ENCODE measurements at regions of chr18 and their contacts with region 1.

Region 1: DNA sequence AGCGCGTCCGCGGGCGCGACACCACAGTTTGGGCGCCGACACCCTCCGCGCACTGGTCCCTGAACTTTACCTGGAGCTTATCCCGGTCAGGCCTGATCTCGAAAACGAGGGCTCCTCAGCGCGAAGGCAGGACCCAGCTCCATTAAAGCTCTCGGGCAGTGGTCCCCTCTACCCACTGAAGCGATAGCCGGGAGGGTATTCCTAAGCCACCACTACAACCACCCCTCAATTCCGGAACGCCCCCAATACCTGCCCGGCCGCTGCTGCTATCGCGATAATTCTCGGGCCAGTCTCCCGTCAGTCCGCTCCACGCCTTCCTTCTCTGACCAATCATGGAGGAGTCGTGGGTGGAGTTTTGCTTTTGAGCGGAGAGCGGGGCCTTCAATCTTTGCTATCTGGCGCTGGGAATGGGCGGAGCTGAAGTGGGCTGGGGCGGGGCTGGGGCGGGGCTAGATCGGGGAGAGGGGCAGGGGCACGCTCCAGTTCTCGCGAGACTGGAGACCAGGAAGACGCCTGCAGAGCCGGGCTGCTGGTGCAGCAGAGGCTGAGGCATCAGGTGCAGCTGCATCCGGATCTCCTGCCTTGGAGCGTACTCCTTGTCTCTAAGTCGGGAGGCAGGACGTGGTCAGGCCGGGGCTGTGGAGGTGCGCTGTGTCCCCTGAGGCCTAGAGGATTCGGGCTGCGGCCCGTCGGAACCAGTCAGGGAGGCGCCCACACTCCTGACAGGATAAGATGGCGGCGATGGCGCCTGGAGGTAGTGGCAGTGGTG is at the starts of genes PIGN and RELCH:
- DNase-seq: peak; percentile 96 to 98
- ATAC-seq: peak; percentile 97 to 98
- H3K4me3 ChIP-seq: peak within 1 kb of the TSS; percentile 94 to 99 (median 97)
- H3K27ac ChIP-seq: peak within 1 kb of the TSS; percentile 84 to 90 (median 87)
- H3K4me1 ChIP-seq: peaks cover 26 to 36% of the 10 kb centered on the region in 2 donors
- H3K27me3 ChIP-seq: no peaks in the 10 kb centered on the region
- CTCF ChIP-seq: peak in 1 of 5 experiments; percentile 8
- POLR2A ChIP-seq: peak; percentile 58 to 82
- total RNA-seq, gene PIGN: 10.7 to 18.7 (median 14.8) TPM
- total RNA-seq, gene RELCH: 8.4 to 16.8 (median 12.6) TPM

Region 2: DNA sequence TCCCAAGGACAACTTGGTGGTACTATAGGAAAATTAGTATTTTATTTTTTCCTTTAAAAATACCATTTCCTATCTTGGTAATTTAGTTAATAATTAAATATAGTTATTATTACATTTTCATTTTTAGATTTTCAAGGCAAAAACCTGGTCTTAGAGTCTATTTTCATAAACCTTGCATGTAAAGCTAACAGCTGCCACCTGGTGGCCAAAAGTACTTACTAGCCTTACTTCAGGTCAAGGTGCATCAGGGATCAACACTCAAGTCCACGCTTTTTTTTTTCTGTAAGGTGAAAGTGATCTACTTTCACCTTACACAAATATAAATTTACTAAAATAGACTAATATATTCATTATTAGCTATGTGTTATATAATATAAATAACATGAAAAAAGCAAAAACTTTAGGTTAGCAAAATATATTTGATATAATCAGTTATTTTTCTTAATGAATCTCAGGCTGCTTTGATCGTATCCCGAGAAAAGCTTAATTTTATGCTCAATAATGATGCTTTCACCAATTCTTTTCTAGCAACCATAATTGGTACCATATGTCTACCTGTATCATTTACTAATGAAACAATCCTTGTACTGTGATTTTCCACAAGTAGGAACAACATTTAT is 62.6 kb after region 1 on chr18:
- in situ Hi-C with region 1: loop called in 3 of 4 experiments (anchors 5 to 10 kb)
- intact Hi-C with region 1: loop called (anchors 2 kb)
- DNase-seq: peak; percentile 11 to 57
- ATAC-seq: no peak
- H3K4me3 ChIP-seq: no peak overlapping the region
- H3K27ac ChIP-seq: no peak overlapping the region
- H3K4me1 ChIP-seq: no peaks in the 10 kb centered on the region
- H3K27me3 ChIP-seq: no peaks in the 10 kb centered on the region
- CTCF ChIP-seq: peak; percentile 41 to 80 (median 49)
- POLR2A ChIP-seq: no peak

Region 3: GRCh38 chr18:62522504-62523254 is 335.7 kb after region 1 on chr18 and contains the start of gene ZCCHC2:
- in situ Hi-C with region 1: no loop called
- intact Hi-C with region 1: loop called (anchors 5 kb)
- DNase-seq: peak; percentile 98
- ATAC-seq: peak; percentile 56 to 68
- H3K4me3 ChIP-seq: peak within 1 kb of the TSS; percentile 74 to 96 (median 86)
- H3K27ac ChIP-seq: peak within 1 kb of the TSS; percentile 98 to 100 (median 99)
- H3K4me1 ChIP-seq: peaks cover 17 to 27% of the 10 kb centered on the region in 2 donors
- H3K27me3 ChIP-seq: no peaks in the 10 kb centered on the region
- CTCF ChIP-seq: no peak
- POLR2A ChIP-seq: peak; percentile 95 to 98
- total RNA-seq, gene ZCCHC2: 22.1 to 37.9 (median 32.0) TPM

Region 4: DNA sequence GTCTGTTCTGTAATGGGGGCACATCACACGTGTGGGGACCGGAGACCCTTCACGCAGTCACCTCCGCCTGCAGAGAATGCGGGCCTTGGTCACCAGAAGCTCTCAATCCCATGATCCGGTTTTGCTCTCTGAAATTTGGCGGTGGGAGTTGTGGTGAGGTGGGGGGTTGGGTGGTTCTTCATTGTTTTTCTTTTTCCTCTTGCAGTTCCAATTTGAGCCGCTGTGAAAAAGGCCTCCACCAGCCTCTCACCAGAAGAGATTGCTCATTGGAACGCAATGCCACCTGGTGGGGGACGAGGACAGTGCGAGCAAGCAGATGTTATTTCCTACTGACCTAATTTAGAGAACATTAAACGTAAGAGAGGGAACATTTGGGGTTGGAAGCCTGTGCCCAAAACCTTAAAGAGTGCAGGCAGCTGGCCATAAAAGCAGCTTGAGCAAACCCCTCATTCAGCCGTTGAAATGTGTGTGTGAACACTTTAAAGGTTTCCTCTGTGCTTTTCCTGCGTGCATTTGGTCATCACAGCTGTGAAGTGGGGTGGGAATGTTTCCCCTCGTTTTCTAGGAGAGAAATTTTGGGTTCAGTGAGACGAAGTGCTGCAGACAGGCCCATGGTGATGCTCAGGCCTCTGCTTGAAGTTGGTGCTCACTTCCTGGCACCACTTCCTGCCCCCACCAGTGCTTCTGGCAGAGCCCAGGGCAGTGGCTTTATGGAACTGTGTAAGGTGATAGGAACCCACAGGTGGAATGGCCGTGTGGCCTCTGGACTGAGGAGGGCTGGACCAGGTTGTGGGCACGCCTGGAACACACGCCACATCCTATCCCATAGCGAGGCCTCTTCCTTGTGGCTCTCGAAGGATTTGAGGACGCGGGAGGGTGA is 397.5 kb after region 1 on chr18:
- in situ Hi-C with region 1: loop called in 1 of 4 experiments (anchors 25 kb)
- intact Hi-C with region 1: loop called (anchors 5 kb)
- DNase-seq: peak; percentile 78 to 83
- ATAC-seq: peak; percentile 90 to 95
- H3K4me3 ChIP-seq: peak overlapping the region in 2 of 4 donors; percentile 30 to 35
- H3K27ac ChIP-seq: peak overlapping the region; percentile 63 to 70 (median 64)
- H3K4me1 ChIP-seq: peaks cover 11 to 13% of the 10 kb centered on the region in 2 donors
- H3K27me3 ChIP-seq: no peaks in the 10 kb centered on the region
- CTCF ChIP-seq: peak; percentile 95 to 99 (median 97)
- POLR2A ChIP-seq: no peak

Region 5: GRCh38 chr18:63367053-63367953 is 1180.3 kb after region 1 on chr18 and contains the start of gene KDSR:
- in situ Hi-C with region 1: no loop called
- intact Hi-C with region 1: loop called (anchors 5 kb)
- DNase-seq: peak; percentile 85 to 90
- ATAC-seq: peak; percentile 88 to 89
- H3K4me3 ChIP-seq: peak within 1 kb of the TSS; percentile 81 to 95 (median 90)
- H3K27ac ChIP-seq: peak within 1 kb of the TSS; percentile 90 to 99 (median 97)
- H3K4me1 ChIP-seq: peaks cover 19 to 21% of the 10 kb centered on the region in 2 donors
- H3K27me3 ChIP-seq: no peaks in the 10 kb centered on the region
- CTCF ChIP-seq: peak in 2 of 5 experiments; percentile 12 to 26
- POLR2A ChIP-seq: peak; percentile 80 to 87
- total RNA-seq, gene KDSR: 11.2 to 18.6 (median 14.4) TPM

Measured in gastrocnemius medialis (tissue), 4 donors.